CD4-positive, alpha-beta T cell (primary cell): ENCODE measurements at regions of chr10 and their contacts with region 1.

Region 1: DNA sequence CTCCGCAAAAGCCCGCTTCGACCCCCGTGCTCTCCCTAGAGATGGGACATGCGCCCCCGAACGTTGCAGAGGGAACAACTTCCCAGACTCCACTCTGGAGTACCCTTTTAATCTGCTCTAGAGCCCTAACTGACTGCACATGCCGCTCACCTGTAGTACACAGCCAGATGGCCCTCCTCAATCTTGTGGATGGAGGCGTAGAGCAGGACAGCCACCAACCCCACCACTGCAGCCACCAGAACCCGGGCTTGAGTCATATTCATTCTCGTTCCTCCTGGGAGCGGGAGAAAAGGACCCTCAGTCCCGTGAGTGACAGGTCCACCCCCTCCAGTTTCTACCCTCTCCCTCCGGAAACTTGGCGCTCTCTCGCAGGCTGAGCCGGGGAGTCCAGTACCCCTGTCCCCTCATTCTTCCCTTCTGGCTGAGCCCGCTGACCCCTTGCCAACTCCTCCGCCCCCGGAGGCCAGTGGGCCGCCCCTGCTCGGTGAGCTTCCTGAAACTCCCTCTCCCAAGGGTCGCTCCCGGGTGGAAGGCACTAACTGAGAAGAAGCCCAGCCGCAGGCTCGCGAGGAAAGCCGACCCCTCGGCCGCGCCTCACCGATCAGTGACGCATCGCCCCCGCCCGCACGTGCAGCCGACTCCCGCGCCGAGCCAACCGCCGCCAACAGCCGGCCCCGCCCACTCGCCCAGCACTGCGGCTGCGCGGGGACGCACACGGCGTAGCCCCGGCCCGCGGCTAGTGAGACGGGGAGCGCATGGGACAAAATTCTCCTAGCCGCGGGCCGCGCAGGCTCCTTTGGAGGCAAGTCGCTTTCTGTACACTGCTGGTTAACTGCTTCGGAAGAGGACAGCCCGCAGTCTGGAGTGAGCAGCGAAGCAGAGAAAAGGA is at the start of gene ERLIN1:
- DNase-seq: peak; percentile 82 to 96 (median 90)
- ATAC-seq: peak; percentile 92
- H3K4me3 ChIP-seq: peak within 1 kb of the TSS; percentile 80
- H3K4me3 Mint-ChIP-seq: peak within 1 kb of the TSS; percentile 98
- H3K27ac ChIP-seq: peak within 1 kb of the TSS; percentile 72 to 81
- H3K27ac Mint-ChIP-seq: peak within 1 kb of the TSS; percentile 92
- H3K4me1 ChIP-seq: peaks cover 22% of the 10 kb centered on the region
- H3K4me1 Mint-ChIP-seq: peaks cover 73% of the 10 kb centered on the region
- H3K27me3 ChIP-seq: no peaks in the 10 kb centered on the region
- H3K27me3 Mint-ChIP-seq: no peaks in the 10 kb centered on the region
- CTCF ChIP-seq: no peak
- total RNA-seq, gene ERLIN1: 1.5 to 2.9 TPM

Region 2: GRCh38 chr10:99276848-99277486 is 908.6 kb before region 1 on chr10:
- CTCF ChIA-PET with region 1: no interaction called
- POLR2A ChIA-PET with region 1: no interaction called
- intact Hi-C with region 1: no loop called
- DNase-seq: peak in 1 of 14 experiments; percentile 0
- ATAC-seq: no peak
- H3K4me3 ChIP-seq: no peak overlapping the region
- H3K4me3 Mint-ChIP-seq: no peak overlapping the region
- H3K27ac ChIP-seq: no peak overlapping the region
- H3K27ac Mint-ChIP-seq: no peak overlapping the region
- H3K4me1 ChIP-seq: no peaks in the 10 kb centered on the region
- H3K4me1 Mint-ChIP-seq: no peaks in the 10 kb centered on the region
- H3K27me3 ChIP-seq: peaks cover 0 to 24% of the 10 kb centered on the region in 2 experiments
- H3K27me3 Mint-ChIP-seq: peaks cover 35% of the 10 kb centered on the region
- CTCF ChIP-seq: no peak

Region 3: GRCh38 chr10:99430451-99431189 is 755.0 kb before region 1 on chr10 and contains the start of gene GOT1:
- CTCF ChIA-PET with region 1: no interaction called
- POLR2A ChIA-PET with region 1: no interaction called
- intact Hi-C with region 1: loop called in 1 of 2 experiments (anchors 10 kb)
- DNase-seq: peak; percentile 79 to 98 (median 87)
- ATAC-seq: peak; percentile 93
- H3K4me3 ChIP-seq: peak within 1 kb of the TSS; percentile 93
- H3K4me3 Mint-ChIP-seq: peak within 1 kb of the TSS; percentile 91
- H3K27ac ChIP-seq: peak within 1 kb of the TSS; percentile 52 to 67
- H3K27ac Mint-ChIP-seq: peak within 1 kb of the TSS; percentile 95
- H3K4me1 ChIP-seq: peaks cover 17% of the 10 kb centered on the region
- H3K4me1 Mint-ChIP-seq: peaks cover 47% of the 10 kb centered on the region
- H3K27me3 ChIP-seq: no peaks in the 10 kb centered on the region
- H3K27me3 Mint-ChIP-seq: no peaks in the 10 kb centered on the region
- CTCF ChIP-seq: no peak
- total RNA-seq, gene GOT1: 3.5 to 5.7 TPM